H1 (cell line): ENCODE measurements at regions of chr9 and their contacts with region 1.

Region 1: DNA sequence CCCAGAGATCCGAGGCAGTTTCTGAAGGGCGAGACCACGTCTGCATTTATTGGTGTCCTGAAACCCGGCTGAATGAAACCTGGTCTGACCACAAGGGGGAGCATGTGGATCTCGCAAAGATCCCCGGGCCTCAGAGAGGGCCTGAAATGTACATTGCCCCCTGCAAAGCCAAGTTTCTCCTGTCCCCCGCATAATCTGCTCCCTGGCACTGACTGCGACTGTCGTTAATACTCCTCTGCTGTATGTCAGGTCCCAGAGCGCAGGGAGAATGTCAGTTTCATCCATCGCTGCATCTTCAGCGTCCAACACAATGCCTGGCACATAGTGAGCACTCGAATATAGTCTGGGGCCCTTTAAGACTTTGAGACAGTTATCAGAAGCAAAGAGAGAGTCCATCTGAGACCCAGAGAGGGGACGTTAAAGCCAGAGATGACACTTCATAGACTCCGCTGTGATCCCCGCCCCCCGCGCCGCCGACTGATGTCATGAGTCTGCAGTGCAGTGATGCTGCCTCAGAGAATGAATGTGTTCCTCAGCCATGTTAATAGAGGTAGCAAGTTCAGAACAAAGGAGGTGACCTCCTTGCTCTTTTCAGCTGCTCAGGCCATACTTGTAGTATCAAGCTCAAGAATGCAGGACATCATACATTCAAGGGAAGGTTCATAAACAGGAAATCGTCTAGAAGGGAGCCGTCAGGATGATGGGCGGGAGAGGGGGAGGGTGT is 74.5 kb upstream of the BARHL1 start:
- DNase-seq: peak; percentile 43 to 87
- H3K4me3 ChIP-seq: no peak overlapping the region
- H3K27ac ChIP-seq: no peak overlapping the region
- H3K4me1 ChIP-seq: peaks cover 0 to 9% (median 6%) of the 10 kb centered on the region in 4 experiments; a peak in 4 of 7 replicates
- H3K27me3 ChIP-seq: no peaks in the 10 kb centered on the region
- CTCF ChIP-seq: peak; percentile 80 to 89 (median 87)
- EP300 ChIP-seq: no peak
- POLR2A ChIP-seq: no peak
- RAD21 ChIP-seq: peak; percentile 91 to 92

Region 2: DNA sequence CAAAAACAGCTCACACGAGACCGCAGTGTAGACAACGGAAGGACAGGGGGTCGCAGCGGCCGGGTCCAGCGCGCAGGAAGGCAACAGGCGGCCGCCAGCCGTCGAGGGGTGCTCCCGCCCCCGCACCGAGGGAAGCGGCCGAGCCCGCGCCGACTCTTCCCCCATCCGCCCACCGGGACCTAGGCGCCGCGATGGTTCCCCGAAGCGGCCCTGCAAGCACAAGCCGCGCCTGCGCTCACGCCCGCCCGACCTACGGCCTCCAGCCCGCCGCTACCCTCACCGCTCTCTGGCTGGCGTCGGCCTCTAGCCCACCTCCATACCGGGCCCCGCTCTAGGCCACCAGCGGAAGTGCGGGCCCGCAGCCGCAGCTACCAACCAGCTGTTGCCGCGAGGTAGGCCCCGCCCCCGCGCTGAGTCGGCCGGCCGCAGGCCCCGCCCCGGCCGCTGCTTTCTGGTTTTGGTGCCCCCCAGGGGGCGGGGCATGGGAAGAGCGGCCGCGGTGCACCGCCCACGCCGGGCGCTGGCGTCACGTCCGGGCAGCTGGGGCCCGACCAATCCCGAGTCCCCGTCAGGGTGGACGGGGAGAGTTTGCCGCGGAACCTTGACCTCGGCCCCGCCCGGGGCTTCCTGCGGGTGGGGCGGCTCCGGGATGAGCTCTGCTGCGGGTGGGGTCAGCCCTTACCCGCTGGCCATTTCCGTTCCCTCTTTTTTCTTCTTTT is 153.1 kb before region 1 on chr9 and contains the start of gene SETX:
- CTCF ChIA-PET with region 1: no interaction called
- POLR2A ChIA-PET with region 1: no interaction called
- DNase-seq: peak; percentile 92 to 93
- H3K4me3 ChIP-seq: peak within 1 kb of the TSS; percentile 87 to 97 (median 90)
- H3K27ac ChIP-seq: peak within 1 kb of the TSS; percentile 81; the same call in 1 of the 2 replicates
- H3K4me1 ChIP-seq: no peaks in the 10 kb centered on the region; a peak in 1 of 7 replicates
- H3K27me3 ChIP-seq: no peaks in the 10 kb centered on the region
- CTCF ChIP-seq: no peak
- EP300 ChIP-seq: no peak
- POLR2A ChIP-seq: peak; percentile 90 to 92
- RAD21 ChIP-seq: no peak
- total RNA-seq, gene SETX: 33.2 and 37.9 TPM in 2 replicates

Region 3: GRCh38 chr9:132404228-132404881 is 103.6 kb before region 1 on chr9:
- CTCF ChIA-PET with region 1: no interaction called
- POLR2A ChIA-PET with region 1: no interaction called
- DNase-seq: no peak
- H3K4me3 ChIP-seq: no peak overlapping the region
- H3K27ac ChIP-seq: no peak overlapping the region
- H3K4me1 ChIP-seq: peaks cover 0 to 5% (median 1%) of the 10 kb centered on the region in 4 experiments; a peak in 2 of 7 replicates
- H3K27me3 ChIP-seq: peaks cover 0 to 7% (median 3%) of the 10 kb centered on the region in 4 experiments; a peak in 5 of 7 replicates
- CTCF ChIP-seq: no peak
- EP300 ChIP-seq: no peak
- POLR2A ChIP-seq: no peak
- RAD21 ChIP-seq: no peak

Region 4: DNA sequence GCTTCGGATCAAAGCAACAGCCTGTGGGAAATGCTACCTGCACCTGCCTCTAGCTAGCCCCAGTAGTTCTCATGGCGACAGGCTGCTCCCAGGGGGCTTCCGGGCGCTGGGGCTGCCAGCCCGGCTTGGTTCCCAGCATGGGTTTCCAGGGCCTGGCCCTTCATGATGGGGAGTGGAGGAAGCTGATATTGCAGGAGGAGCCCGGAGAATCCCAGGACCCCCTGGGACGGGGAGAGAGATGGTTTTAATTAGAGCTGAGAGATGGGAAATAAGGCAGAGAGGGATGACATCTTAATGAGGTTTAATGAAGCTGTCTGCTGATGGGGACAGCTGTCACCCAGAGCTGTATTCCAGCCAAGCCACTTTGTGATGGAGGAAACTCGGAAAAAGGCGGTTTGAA is 19.3 kb before region 1 on chr9:
- CTCF ChIA-PET with region 1: interaction called, 15 read pairs
- POLR2A ChIA-PET with region 1: no interaction called
- DNase-seq: no peak
- H3K4me3 ChIP-seq: no peak overlapping the region
- H3K27ac ChIP-seq: no peak overlapping the region
- H3K4me1 ChIP-seq: peaks cover 0 to 1% (median under 1%) of the 10 kb centered on the region in 4 experiments; a peak in 3 of 7 replicates
- H3K27me3 ChIP-seq: no peaks in the 10 kb centered on the region
- CTCF ChIP-seq: no peak
- EP300 ChIP-seq: no peak
- POLR2A ChIP-seq: no peak
- RAD21 ChIP-seq: no peak

Region 5: DNA sequence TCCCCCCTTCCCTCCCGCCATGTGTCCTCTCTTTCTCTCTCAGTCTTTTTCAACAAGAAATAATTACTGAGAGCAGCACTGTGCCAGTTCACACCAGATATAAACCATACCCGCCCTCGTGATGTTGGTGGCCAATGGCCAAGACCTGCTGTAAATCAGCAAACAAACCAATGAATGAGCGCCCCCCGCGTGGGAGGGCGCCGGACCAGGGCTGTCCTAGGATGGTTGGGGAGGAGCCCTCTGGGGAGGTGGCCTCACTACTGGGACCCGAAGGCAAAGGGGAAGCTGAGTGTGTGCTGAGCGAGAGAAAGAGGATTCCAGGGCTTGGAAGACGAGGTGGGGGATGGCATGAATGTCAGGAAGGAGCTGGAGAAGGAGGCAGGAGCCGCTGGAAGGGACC is 23.3 kb after region 1 on chr9:
- CTCF ChIA-PET with region 1: interaction called, 10 read pairs
- POLR2A ChIA-PET with region 1: no interaction called
- DNase-seq: no peak
- H3K4me3 ChIP-seq: no peak overlapping the region
- H3K27ac ChIP-seq: no peak overlapping the region
- H3K4me1 ChIP-seq: no peaks in the 10 kb centered on the region
- H3K27me3 ChIP-seq: no peaks in the 10 kb centered on the region
- CTCF ChIP-seq: no peak
- EP300 ChIP-seq: no peak
- POLR2A ChIP-seq: no peak
- RAD21 ChIP-seq: no peak

Region 6: GRCh38 chr9:132538071-132538470 is 30.2 kb after region 1 on chr9:
- CTCF ChIA-PET with region 1: interaction called, 12 read pairs
- POLR2A ChIA-PET with region 1: no interaction called
- DNase-seq: no peak
- H3K4me3 ChIP-seq: no peak overlapping the region
- H3K27ac ChIP-seq: no peak overlapping the region
- H3K4me1 ChIP-seq: peaks cover 0 to 3% (median 1%) of the 10 kb centered on the region in 4 experiments; a peak in 3 of 7 replicates
- H3K27me3 ChIP-seq: no peaks in the 10 kb centered on the region
- CTCF ChIP-seq: no peak
- EP300 ChIP-seq: no peak
- POLR2A ChIP-seq: no peak
- RAD21 ChIP-seq: no peak

Region 7: DNA sequence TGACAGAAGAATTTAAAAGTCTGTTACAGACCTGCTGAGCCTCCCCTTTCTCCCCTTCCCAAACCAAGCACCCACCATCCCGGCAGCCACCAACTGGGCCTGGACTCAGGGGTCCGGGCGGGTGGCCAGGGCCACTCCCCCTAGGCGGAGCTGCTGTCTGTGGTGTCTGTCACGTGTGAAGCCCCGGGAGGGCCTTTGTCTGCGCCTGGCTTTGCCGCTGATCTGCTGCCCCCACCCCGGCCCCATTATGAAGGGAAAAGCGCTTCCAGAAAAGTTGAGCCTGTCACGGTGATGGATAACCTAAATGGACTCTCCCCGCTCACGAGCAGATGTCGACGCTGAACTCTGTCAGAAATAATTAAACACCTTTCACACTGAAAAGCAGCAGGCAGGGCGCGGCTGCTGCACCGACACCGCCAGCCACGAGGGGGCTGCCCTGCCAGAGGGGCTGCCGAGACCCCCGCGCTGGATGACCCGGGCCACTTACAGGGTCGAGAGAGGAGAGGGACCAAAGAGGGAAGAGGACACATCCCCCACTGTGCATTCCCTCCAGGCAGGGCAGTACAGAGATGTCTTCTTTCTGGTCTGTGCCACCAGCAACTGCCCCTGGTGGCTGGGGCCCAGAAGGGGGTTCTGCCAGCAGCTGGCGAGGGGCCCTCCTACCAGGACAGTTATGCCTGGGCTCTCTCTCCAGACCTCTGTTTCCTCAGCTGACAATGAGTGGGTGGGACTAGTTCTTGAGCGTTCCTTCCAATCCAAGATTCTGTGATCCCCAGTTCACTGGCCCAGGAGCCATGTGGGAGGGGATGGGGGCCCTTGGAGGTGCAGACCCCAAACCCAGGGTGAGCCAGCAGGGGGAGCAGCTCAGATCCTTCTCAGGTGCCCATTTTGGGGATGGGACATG is 38.5 kb after region 1 on chr9:
- CTCF ChIA-PET with region 1: interaction called, 66 read pairs
- POLR2A ChIA-PET with region 1: no interaction called
- DNase-seq: peak; percentile 34 to 90
- H3K4me3 ChIP-seq: peak overlapping the region; percentile 8 to 55 (median 46); a peak in 7 of 8 replicates
- H3K27ac ChIP-seq: no peak overlapping the region
- H3K4me1 ChIP-seq: peaks cover 0 to 4% (median 4%) of the 10 kb centered on the region in 4 experiments; a peak in 4 of 7 replicates
- H3K27me3 ChIP-seq: no peaks in the 10 kb centered on the region; a peak in 1 of 7 replicates
- CTCF ChIP-seq: peak; percentile 65 to 78 (median 72)
- EP300 ChIP-seq: no peak
- POLR2A ChIP-seq: no peak
- RAD21 ChIP-seq: peak; percentile 30 to 49

Region 8: GRCh38 chr9:132560616-132561202 is 52.8 kb after region 1 on chr9:
- CTCF ChIA-PET with region 1: interaction called, 13 read pairs
- POLR2A ChIA-PET with region 1: no interaction called
- DNase-seq: no peak
- H3K4me3 ChIP-seq: no peak overlapping the region
- H3K27ac ChIP-seq: no peak overlapping the region
- H3K4me1 ChIP-seq: peaks cover 0 to 3% (median 0%) of the 10 kb centered on the region in 4 experiments; a peak in 1 of 7 replicates
- H3K27me3 ChIP-seq: no peaks in the 10 kb centered on the region
- CTCF ChIP-seq: no peak
- EP300 ChIP-seq: no peak
- POLR2A ChIP-seq: no peak
- RAD21 ChIP-seq: no peak

Region 9: GRCh38 chr9:132575005-132575609 is 67.2 kb after region 1 on chr9:
- CTCF ChIA-PET with region 1: interaction called, 93 read pairs
- POLR2A ChIA-PET with region 1: no interaction called
- DNase-seq: peak in 1 of 2 experiments; percentile 90
- H3K4me3 ChIP-seq: no peak overlapping the region
- H3K27ac ChIP-seq: no peak overlapping the region
- H3K4me1 ChIP-seq: peaks cover 0 to 9% (median 7%) of the 10 kb centered on the region in 4 experiments; a peak in 5 of 7 replicates
- H3K27me3 ChIP-seq: peaks cover 29 to 50% (median 49%) of the 10 kb centered on the region in 4 experiments
- CTCF ChIP-seq: peak; percentile 89 to 98 (median 91)
- EP300 ChIP-seq: no peak
- POLR2A ChIP-seq: no peak
- RAD21 ChIP-seq: peak; percentile 99